Tibial artery (tissue), 4 donors: ENCODE measurements at regions of chr9 and their contacts with region 1.

Region 1: DNA sequence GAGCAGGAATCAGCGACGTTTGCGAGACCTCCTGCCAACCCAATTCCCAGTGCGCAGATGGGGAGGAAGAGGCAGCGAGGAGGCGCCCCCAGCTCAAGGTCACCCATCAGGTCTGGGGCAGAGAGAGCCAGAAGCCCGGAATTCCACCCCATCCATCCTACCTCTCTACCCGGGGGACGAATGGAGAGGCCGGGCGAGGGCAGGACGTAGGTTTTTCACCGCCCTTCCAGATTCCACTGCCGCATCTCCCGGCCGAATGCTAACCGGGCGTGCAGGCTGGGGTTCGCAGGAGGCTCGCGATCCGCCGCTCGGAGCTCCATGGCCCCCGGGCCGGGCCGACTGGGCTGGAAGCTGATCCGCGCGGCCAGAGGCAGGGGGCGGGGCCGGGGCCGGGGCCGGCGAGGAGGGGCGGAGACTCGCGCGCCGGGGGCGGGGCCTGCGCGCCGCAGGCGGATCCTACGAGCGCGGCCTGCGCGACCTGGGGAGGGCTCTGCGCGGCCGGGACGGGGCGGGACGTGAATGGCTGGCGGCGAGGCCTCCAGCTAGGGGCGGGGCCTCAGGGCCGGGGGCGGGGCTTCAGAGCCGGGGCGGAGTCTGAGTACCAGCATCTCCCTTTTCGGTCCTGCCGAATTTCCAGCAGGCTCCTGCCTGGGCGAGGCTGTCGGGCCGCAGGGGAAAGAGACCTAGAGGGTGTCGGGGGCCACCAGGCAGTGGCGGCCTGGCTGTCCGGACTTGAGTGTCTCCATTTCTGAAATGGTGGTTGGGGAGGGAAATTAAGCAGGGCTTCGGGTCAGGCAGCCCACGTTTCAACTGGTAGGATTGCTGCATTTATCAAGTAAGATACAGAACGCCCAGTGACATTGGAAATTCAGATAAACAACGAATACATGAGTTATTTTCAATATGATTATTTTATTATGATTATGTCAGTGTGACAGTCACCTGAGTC is at the start of gene ST6GALNAC4:
- DNase-seq: peak; percentile 95 to 98
- H3K4me3 ChIP-seq: peak within 1 kb of the TSS; percentile 76 to 81
- H3K27ac ChIP-seq: peak within 1 kb of the TSS; percentile 74 to 87
- H3K4me1 ChIP-seq: peaks cover 6 to 65% (median 48%) of the 10 kb centered on the region in 4 donors
- H3K27me3 ChIP-seq: peaks cover 0 to 3% of the 10 kb centered on the region in 2 donors
- CTCF ChIP-seq: no peak

Region 2: GRCh38 chr9:127503947-127504782 is 412.8 kb before region 1 on chr9:
- intact Hi-C with region 1: loop called (anchors 5 kb)
- DNase-seq: peak; percentile 88 to 91
- H3K4me3 ChIP-seq: no peak overlapping the region
- H3K27ac ChIP-seq: peak overlapping the region; percentile 60 to 64
- H3K4me1 ChIP-seq: peaks cover 0 to 17% (median 6%) of the 10 kb centered on the region in 4 donors
- H3K27me3 ChIP-seq: no peaks in the 10 kb centered on the region
- CTCF ChIP-seq: peak; percentile 83 to 91

Region 3: GRCh38 chr9:127611899-127612790 is 304.8 kb before region 1 on chr9 and contains the start of gene STXBP1:
- intact Hi-C with region 1: loop called (anchors 5 kb)
- DNase-seq: peak; percentile 81 to 92
- H3K4me3 ChIP-seq: peak within 1 kb of the TSS; percentile 70 to 75
- H3K27ac ChIP-seq: peak within 1 kb of the TSS; percentile 73 to 85
- H3K4me1 ChIP-seq: peaks cover 0 to 34% (median 15%) of the 10 kb centered on the region in 4 donors
- H3K27me3 ChIP-seq: no peaks in the 10 kb centered on the region
- CTCF ChIP-seq: no peak

Region 4: GRCh38 chr9:127734747-127735529 is 182.0 kb before region 1 on chr9 and contains the start of gene TOR2A:
- intact Hi-C with region 1: loop called (anchors 2 kb)
- DNase-seq: peak; percentile 94 to 98
- H3K4me3 ChIP-seq: peak within 1 kb of the TSS; percentile 69 to 75
- H3K27ac ChIP-seq: peak within 1 kb of the TSS; percentile 93
- H3K4me1 ChIP-seq: peaks cover 0 to 13% (median 7%) of the 10 kb centered on the region in 4 donors
- H3K27me3 ChIP-seq: no peaks in the 10 kb centered on the region
- CTCF ChIP-seq: peak; percentile 92 to 99

Region 5: DNA sequence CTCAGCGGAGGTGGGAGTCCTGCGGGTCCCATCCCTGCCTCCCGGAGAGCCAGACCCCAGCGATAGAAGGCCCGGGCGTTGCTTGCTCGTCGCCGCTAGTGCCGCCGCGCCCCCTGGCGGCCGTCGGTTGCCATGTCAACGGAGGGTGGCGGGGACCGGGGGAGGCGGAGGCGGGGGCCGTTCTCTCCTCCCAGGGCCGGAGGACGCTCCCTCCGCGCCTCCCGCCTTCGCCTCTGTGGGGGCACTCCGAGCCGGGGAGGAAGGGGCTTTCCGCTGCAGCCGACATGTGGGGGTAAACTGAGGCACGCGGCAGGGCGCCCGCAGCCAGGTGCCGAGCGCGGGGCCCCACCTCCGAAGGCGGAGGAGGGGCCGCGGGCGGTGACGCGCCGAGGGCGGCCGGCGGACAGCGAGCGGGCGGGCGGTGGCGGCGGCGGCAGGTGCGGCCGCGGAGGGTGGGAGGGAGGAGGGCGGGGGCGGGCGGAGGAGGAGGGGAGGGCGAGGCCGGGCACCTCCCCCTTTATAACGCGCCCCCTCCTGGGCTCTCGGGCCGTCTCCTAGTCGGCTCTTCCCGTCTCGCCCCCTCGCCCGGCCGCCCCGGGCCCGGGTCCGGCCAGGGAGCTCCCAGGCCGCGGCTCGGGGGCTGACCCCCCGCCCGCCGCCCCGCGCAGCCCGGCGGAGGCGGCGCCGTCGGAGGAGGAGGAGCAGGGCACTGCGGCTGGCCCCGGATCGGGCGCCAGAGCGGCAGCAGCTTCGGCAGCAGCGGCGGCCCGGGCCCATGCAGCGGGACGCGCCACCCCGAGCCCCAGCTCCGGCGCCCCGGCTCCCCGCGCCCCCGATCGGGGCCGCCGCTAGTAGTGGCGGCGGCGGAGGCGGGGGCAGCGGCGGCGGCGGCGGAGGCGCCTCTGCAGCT is 131.7 kb before region 1 on chr9:
- intact Hi-C with region 1: loop called (anchors 2 kb)
- DNase-seq: peak; percentile 81 to 93
- H3K4me3 ChIP-seq: peak overlapping the region; percentile 72 to 85
- H3K27ac ChIP-seq: peak overlapping the region; percentile 82 to 91
- H3K4me1 ChIP-seq: peaks cover 0 to 30% (median 20%) of the 10 kb centered on the region in 4 donors
- H3K27me3 ChIP-seq: no peaks in the 10 kb centered on the region
- CTCF ChIP-seq: peak; percentile 88 to 96